ENCODE measurements at regions of chr11 and their contacts with region 1.

Region 1: DNA sequence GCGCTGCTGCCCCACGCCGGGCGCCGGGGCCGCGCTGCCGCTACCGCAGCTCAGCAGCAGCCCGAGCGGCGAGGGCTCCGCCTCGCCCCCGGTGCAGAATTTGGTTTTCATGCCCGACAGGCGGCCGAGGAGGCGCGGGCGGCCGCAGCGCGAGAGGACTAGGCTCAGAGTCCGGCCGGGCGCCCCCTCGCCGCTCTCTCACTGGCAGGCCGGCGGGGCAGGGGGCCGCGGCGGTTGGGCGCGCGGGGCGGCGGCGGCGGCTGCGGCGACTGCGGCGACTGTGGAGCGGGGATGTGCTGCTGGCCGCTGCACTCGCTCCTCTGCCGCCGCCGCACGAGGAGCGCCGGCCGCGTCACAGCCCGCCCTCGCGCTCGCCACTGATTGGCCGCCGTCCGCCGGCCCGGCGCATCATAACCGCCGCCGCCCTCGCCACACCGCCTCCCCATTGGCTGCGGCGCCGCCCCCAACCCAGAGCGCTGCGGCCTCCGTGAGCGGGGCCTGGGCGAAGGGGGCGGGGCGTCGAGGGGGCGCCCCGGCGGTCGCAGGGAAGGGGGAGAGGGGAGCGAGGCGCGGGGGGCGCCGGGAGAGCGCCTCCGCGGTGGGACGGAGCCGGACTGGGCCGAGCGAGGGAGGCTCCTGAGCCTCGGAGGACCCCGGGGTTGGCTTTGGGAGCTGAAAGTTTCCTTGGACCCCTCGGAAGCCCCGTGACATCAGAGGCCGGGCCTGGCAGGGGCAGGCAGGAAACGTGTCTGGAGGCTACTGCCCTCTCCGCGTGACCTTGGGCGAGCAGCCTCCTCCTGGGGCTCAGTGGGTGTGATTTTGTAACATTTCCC is at the start of gene CHKA:
- DNase-seq: peak; percentile 70 to 93
- H3K4me3 ChIP-seq: peak within 1 kb of the TSS; percentile 86 to 99 (median 92)
- H3K27ac ChIP-seq: peak within 1 kb of the TSS; percentile 90
- H3K4me1 ChIP-seq: peaks cover 12 to 26% (median 19%) of the 10 kb centered on the region in 4 experiments
- H3K27me3 ChIP-seq: no peaks in the 10 kb centered on the region
- CTCF ChIP-seq: no peak
- EP300 ChIP-seq: peak in 1 of 2 experiments; percentile 46; a peak in 1 of 3 replicates
- POLR2A ChIP-seq: no peak; a peak in 1 of 3 replicates
- RAD21 ChIP-seq: peak in 1 of 2 experiments; percentile 21; a peak in 1 of 4 replicates
- total RNA-seq, gene CHKA: 86.6 and 88.6 TPM in 2 replicates

Region 2: DNA sequence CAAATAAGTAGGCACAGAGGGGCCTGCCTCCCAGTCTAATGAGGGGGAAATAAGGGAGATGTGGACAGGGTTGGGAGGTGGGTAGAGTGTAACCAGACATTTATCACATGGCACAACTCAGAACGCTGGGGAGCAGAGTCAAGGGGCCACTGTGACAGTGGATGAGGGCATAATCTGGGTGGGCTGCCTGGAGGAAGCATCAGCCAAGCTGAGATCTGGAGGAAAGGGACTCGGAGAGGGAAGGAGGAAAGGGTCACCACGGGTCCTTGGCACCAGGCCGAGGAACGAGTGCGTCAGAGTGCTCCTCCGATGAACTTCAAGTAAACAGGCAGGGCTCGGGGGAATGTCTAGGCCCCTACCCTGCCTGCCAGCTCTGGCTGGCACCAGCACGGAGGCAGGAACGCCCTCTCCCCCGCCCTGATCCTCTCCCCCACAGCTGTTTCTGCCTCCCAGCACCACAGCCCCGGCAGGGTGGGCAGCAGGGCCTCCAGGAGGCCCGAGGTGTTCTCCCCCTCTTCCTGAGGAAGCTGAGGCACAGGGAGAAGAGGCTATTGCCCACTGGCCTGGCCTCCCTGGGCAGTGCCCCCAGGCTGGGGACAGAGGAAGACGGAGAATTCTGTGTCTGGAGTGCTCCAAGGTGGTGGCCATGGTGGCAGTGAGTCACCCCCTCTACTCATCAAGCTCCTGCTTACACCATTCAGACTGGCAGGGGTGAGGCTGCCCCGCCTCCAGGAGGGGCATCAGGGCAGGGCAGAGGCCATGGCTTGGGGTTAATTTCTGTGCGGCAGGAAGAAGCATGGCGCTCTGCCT is 106.9 kb before region 1 on chr11:
- CTCF ChIA-PET with region 1: no interaction called
- POLR2A ChIA-PET with region 1: no interaction called
- DNase-seq: no peak
- H3K4me3 ChIP-seq: no peak overlapping the region
- H3K27ac ChIP-seq: no peak overlapping the region
- H3K4me1 ChIP-seq: peaks cover 0 to 17% (median 12%) of the 10 kb centered on the region in 4 experiments; a peak in 6 of 7 replicates
- H3K27me3 ChIP-seq: no peaks in the 10 kb centered on the region
- CTCF ChIP-seq: no peak
- EP300 ChIP-seq: no peak
- POLR2A ChIP-seq: no peak
- RAD21 ChIP-seq: no peak

Region 3: GRCh38 chr11:68051191-68052144 is 69.8 kb before region 1 on chr11:
- CTCF ChIA-PET with region 1: no interaction called
- POLR2A ChIA-PET with region 1: interaction called, 11 read pairs
- DNase-seq: peak in 1 of 2 experiments; percentile 69
- H3K4me3 ChIP-seq: no peak overlapping the region
- H3K27ac ChIP-seq: no peak overlapping the region
- H3K4me1 ChIP-seq: peaks cover 0 to 10% (median 6%) of the 10 kb centered on the region in 4 experiments; a peak in 5 of 7 replicates
- H3K27me3 ChIP-seq: no peaks in the 10 kb centered on the region
- CTCF ChIP-seq: no peak
- EP300 ChIP-seq: no peak
- POLR2A ChIP-seq: no peak
- RAD21 ChIP-seq: no peak

Region 4: DNA sequence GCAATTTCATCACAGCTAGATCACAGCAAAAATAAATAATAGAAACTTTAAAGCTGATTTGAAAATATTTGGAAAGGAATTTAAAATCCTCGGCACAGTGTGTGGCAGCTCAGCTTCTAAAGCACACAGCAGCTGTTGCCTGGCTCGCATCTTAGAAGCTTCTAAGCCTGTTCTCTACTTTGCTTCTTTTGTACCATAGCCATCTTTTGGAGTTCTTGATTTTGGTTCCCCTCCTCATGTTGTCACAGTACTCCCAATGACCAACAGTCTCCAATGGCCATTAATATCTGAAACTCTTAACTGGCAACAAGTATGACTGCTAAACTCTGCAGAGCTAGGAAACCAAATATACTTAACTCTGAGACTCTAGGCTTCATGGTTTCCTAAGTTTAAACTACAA is 28.9 kb before region 1 on chr11:
- CTCF ChIA-PET with region 1: interaction called, 4 read pairs
- POLR2A ChIA-PET with region 1: interaction called, 10 read pairs
- DNase-seq: peak in 1 of 2 experiments; percentile 13
- H3K4me3 ChIP-seq: no peak overlapping the region
- H3K27ac ChIP-seq: no peak overlapping the region
- H3K4me1 ChIP-seq: no peaks in the 10 kb centered on the region
- H3K27me3 ChIP-seq: no peaks in the 10 kb centered on the region
- CTCF ChIP-seq: no peak
- EP300 ChIP-seq: no peak
- POLR2A ChIP-seq: no peak
- RAD21 ChIP-seq: no peak

Region 5: GRCh38 chr11:68106165-68106957 is 14.9 kb before region 1 on chr11:
- CTCF ChIA-PET with region 1: interaction called, 4 read pairs
- POLR2A ChIA-PET with region 1: interaction called, 47 read pairs
- DNase-seq: no peak
- H3K4me3 ChIP-seq: no peak overlapping the region
- H3K27ac ChIP-seq: no peak overlapping the region
- H3K4me1 ChIP-seq: peaks cover 0 to 7% (median 3%) of the 10 kb centered on the region in 4 experiments; a peak in 3 of 7 replicates
- H3K27me3 ChIP-seq: no peaks in the 10 kb centered on the region
- CTCF ChIP-seq: no peak
- EP300 ChIP-seq: no peak
- POLR2A ChIP-seq: no peak
- RAD21 ChIP-seq: no peak

Region 6: GRCh38 chr11:68213555-68214174 is 92.4 kb after region 1 on chr11:
- CTCF ChIA-PET with region 1: interaction called, 8 read pairs
- POLR2A ChIA-PET with region 1: interaction called, 12 read pairs
- DNase-seq: peak; percentile 70 to 93
- H3K4me3 ChIP-seq: peak overlapping the region; percentile 57 to 99 (median 74)
- H3K27ac ChIP-seq: peak overlapping the region; percentile 100
- H3K4me1 ChIP-seq: peaks cover 4 to 20% (median 10%) of the 10 kb centered on the region in 4 experiments
- H3K27me3 ChIP-seq: peaks cover 0 to 2% (median 0%) of the 10 kb centered on the region in 4 experiments; a peak in 2 of 7 replicates
- CTCF ChIP-seq: no peak
- EP300 ChIP-seq: peak in 1 of 2 experiments; percentile 18; a peak in 1 of 3 replicates
- POLR2A ChIP-seq: peak; percentile 94 to 97
- RAD21 ChIP-seq: no peak; a peak in 1 of 4 replicates

Region 7: DNA sequence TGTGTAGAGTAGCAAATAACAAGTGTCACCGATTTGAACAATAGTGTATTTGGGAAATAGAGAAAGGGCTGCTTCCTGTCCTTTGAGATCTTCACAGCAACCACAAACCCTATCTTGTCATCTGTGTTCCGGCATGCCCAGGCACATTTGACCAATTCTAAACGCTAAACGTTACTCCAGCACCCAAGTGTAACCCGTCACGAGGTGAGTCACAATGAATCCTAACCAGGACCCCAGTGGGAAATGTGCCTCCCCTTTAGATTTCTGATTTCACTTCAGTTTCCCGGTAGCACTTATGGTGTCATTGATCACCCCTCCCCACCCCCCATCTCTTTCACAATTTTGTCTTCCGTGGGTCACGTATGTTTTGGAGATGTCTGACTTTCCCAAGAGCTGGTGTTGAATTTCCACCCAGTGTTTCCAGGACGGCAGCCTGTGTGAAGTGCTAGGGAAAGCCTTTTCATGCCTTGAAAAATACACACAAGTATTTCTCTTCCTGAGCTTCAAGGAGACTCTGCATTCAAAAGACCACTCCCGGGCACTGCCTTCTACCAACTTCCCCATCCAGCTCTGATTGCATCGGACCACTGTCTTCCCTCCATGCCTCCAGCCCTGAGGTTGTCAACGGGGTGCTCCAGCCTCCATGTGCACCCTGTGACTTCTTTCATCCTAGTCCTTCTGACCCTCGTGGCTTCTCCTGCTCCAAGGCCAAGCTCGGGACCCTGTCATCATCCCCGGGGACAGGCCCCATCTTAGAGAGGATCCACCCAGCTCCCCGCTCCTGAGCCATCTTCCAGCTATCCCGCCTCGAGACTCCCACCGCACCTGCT is 161.1 kb after region 1 on chr11:
- CTCF ChIA-PET with region 1: no interaction called
- POLR2A ChIA-PET with region 1: no interaction called
- DNase-seq: no peak
- H3K4me3 ChIP-seq: no peak overlapping the region
- H3K27ac ChIP-seq: no peak overlapping the region
- H3K4me1 ChIP-seq: no peaks in the 10 kb centered on the region
- H3K27me3 ChIP-seq: no peaks in the 10 kb centered on the region
- CTCF ChIP-seq: no peak
- EP300 ChIP-seq: no peak
- POLR2A ChIP-seq: no peak
- RAD21 ChIP-seq: no peak